ENCODE measurements at regions of chr6 and their contacts with region 1.

Region 1: DNA sequence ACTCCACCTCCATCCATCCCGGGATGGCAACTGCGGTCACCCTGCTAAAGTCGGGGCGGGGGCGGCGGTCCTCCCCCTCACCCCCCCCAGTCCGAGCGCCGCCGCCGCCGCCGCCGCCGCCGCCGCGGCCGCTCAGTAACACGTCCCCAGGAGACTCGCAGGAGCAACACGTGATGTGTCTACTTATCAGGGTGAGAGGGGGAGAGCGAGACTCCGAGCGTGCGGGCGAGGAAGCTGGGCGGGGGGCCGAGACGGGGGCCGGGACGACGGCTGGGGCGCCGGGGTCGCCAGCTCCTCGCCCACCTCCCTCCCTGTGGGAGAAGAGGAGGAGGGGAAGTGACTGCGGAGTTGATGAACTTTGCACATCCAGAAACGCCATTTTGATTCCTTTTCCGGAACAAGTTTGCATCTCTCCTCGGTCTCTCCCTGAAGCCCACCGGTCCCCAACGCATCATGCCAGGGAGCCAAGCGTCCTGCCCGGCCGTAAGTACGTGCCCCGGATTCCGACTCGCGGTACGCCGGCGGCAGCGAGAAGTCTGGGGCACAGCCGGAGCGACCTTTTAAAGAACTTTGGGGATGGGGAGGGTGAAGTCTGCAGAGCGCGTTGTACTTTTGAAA is at the start of gene RREB1:
- DNase-seq: peak; percentile 22 to 79 (median 60)
- ATAC-seq: peak; percentile 43
- H3K4me3 ChIP-seq: peak within 1 kb of the TSS; percentile 97
- H3K4me3 Mint-ChIP-seq: peak within 1 kb of the TSS; percentile 95
- H3K27ac ChIP-seq: peak within 1 kb of the TSS; percentile 71 to 84
- H3K27ac Mint-ChIP-seq: peak within 1 kb of the TSS; percentile 97
- H3K4me1 ChIP-seq: peaks cover 31% of the 10 kb centered on the region
- H3K4me1 Mint-ChIP-seq: peaks cover 41% of the 10 kb centered on the region
- H3K27me3 ChIP-seq: no peaks in the 10 kb centered on the region
- H3K27me3 Mint-ChIP-seq: no peaks in the 10 kb centered on the region
- CTCF ChIP-seq: no peak
- total RNA-seq, gene RREB1: 47.1 to 52.4 TPM

Region 2: GRCh38 chr6:5260661-5261544 is 1846.8 kb before region 1 on chr6 and contains the starts of genes FARS2 and LYRM4:
- CTCF ChIA-PET with region 1: no interaction called
- POLR2A ChIA-PET with region 1: no interaction called
- intact Hi-C with region 1: loop called in 1 of 2 experiments (anchors 5 kb)
- DNase-seq: peak; percentile 86 to 98 (median 92)
- ATAC-seq: peak; percentile 82
- H3K4me3 ChIP-seq: peak within 1 kb of the TSS; percentile 93
- H3K4me3 Mint-ChIP-seq: peak within 1 kb of the TSS; percentile 98
- H3K27ac ChIP-seq: peak within 1 kb of the TSS; percentile 97 to 99
- H3K27ac Mint-ChIP-seq: peak within 1 kb of the TSS; percentile 100
- H3K4me1 ChIP-seq: peaks cover 17% of the 10 kb centered on the region
- H3K4me1 Mint-ChIP-seq: peaks cover 37% of the 10 kb centered on the region
- H3K27me3 ChIP-seq: no peaks in the 10 kb centered on the region
- H3K27me3 Mint-ChIP-seq: no peaks in the 10 kb centered on the region
- CTCF ChIP-seq: no peak
- total RNA-seq, gene FARS2: 9.1 to 10.5 TPM
- total RNA-seq, gene LYRM4: 23.4 to 24.3 TPM

Region 3: GRCh38 chr6:7051233-7052114 is 56.2 kb before region 1 on chr6:
- CTCF ChIA-PET with region 1: no interaction called
- POLR2A ChIA-PET with region 1: interaction called, 8 read pairs
- intact Hi-C with region 1: loop called (anchors 1 to 2 kb)
- DNase-seq: peak; percentile 13 to 77 (median 59)
- ATAC-seq: peak; percentile 79
- H3K4me3 ChIP-seq: peak overlapping the region; percentile 59 to 79
- H3K4me3 Mint-ChIP-seq: peak overlapping the region; percentile 81
- H3K27ac ChIP-seq: peak overlapping the region in 1 of 2 experiments; percentile 50
- H3K27ac Mint-ChIP-seq: peak overlapping the region; percentile 82
- H3K4me1 ChIP-seq: peaks cover 5% of the 10 kb centered on the region
- H3K4me1 Mint-ChIP-seq: peaks cover 15% of the 10 kb centered on the region
- H3K27me3 ChIP-seq: no peaks in the 10 kb centered on the region
- H3K27me3 Mint-ChIP-seq: no peaks in the 10 kb centered on the region
- CTCF ChIP-seq: no peak

Region 4: DNA sequence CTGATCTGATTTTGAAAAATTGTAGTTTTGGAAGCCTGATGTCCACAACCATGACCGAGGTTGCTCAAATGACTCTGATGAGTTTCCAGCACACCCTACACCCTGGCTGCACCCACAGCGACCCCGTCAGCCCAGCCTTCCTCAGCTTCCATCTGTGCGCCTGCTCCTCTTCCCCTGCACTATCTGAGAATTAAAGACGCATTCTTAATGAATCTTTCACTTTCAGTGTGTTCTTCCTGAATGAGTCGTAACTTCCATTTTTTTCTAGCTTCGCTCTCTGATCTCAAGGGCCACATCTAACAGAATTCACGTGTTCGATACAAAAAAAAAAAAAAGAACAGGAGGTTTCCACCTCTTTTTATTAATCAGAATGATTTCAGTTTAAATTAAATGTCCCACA is 21.2 kb before region 1 on chr6:
- CTCF ChIA-PET with region 1: interaction called, 3 read pairs
- POLR2A ChIA-PET with region 1: interaction called, 43 read pairs
- intact Hi-C with region 1: loop called (anchors 1 to 2 kb)
- DNase-seq: peak in 7 of 9 experiments; percentile 11 to 77 (median 47)
- ATAC-seq: peak; percentile 68
- H3K4me3 ChIP-seq: peak overlapping the region; percentile 34 to 41
- H3K4me3 Mint-ChIP-seq: peak overlapping the region; percentile 83
- H3K27ac ChIP-seq: peak overlapping the region in 1 of 2 experiments; percentile 48
- H3K27ac Mint-ChIP-seq: peak overlapping the region; percentile 89
- H3K4me1 ChIP-seq: peaks cover 28% of the 10 kb centered on the region
- H3K4me1 Mint-ChIP-seq: peaks cover 35% of the 10 kb centered on the region
- H3K27me3 ChIP-seq: no peaks in the 10 kb centered on the region
- H3K27me3 Mint-ChIP-seq: no peaks in the 10 kb centered on the region
- CTCF ChIP-seq: no peak

Region 5: DNA sequence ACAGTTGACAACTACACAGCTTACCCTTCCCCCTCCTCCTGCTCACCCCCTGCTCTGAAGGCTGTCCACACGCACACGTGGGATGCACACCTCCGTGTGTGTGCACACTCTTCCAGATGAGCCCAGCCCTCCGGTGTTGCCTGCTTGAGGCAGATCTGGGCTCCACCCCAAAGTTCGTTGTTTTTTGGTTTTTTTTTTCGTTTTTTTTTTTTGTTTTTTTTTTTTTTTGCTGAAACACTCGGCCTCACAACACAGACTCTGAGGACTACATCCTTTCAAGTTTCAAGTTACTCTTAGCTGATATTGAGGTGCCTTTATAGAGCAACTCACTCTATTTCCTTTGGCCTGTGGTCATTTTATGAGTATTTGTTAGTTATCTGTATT is 88.3 kb after region 1 on chr6:
- CTCF ChIA-PET with region 1: no interaction called
- POLR2A ChIA-PET with region 1: interaction called, 3 read pairs
- intact Hi-C with region 1: loop called (anchors 5 kb)
- DNase-seq: peak in 3 of 9 experiments; percentile 11 to 51 (median 42)
- ATAC-seq: peak; percentile 85
- H3K4me3 ChIP-seq: no peak overlapping the region
- H3K4me3 Mint-ChIP-seq: peak overlapping the region; percentile 62
- H3K27ac ChIP-seq: no peak overlapping the region
- H3K27ac Mint-ChIP-seq: peak overlapping the region; percentile 85
- H3K4me1 ChIP-seq: peaks cover 26% of the 10 kb centered on the region
- H3K4me1 Mint-ChIP-seq: peaks cover 43% of the 10 kb centered on the region
- H3K27me3 ChIP-seq: no peaks in the 10 kb centered on the region
- H3K27me3 Mint-ChIP-seq: no peaks in the 10 kb centered on the region
- CTCF ChIP-seq: no peak

Region 6: GRCh38 chr6:7851780-7852179 is 744.1 kb after region 1 on chr6:
- CTCF ChIA-PET with region 1: no interaction called
- POLR2A ChIA-PET with region 1: no interaction called
- intact Hi-C with region 1: no loop called
- DNase-seq: no peak
- ATAC-seq: no peak
- H3K4me3 ChIP-seq: no peak overlapping the region
- H3K4me3 Mint-ChIP-seq: no peak overlapping the region
- H3K27ac ChIP-seq: no peak overlapping the region
- H3K27ac Mint-ChIP-seq: no peak overlapping the region
- H3K4me1 ChIP-seq: no peaks in the 10 kb centered on the region
- H3K4me1 Mint-ChIP-seq: no peaks in the 10 kb centered on the region
- H3K27me3 ChIP-seq: no peaks in the 10 kb centered on the region
- H3K27me3 Mint-ChIP-seq: no peaks in the 10 kb centered on the region
- CTCF ChIP-seq: no peak